WTC11 (cell line): ENCODE measurements at regions of chr9 and their contacts with region 1.

Region 1: GRCh38 chr9:137423004-137423874 is at the starts of genes EXD3 and NOXA1:
- DNase-seq: peak; percentile 95
- ATAC-seq: peak; percentile 91
- H3K4me3 Mint-ChIP-seq: peak within 1 kb of the TSS; percentile 88
- H3K27ac Mint-ChIP-seq: 0 out of 2 replicates have a peak within 1 kb of the TSS, but pooled peaks have one; percentile 78
- H3K4me1 Mint-ChIP-seq: peaks cover 7% of the 10 kb centered on the region
- H3K27me3 Mint-ChIP-seq: no peaks in the 10 kb centered on the region; the same call in 1 of the 2 replicates
- CTCF ChIP-seq: peak; percentile 66; the same call in 1 of the 2 replicates
- total RNA-seq, gene EXD3: 20.4 to 23.1 TPM (median 21.2 TPM) in 3 replicates
- total RNA-seq, gene NOXA1: 2.9 to 5.9 TPM (median 4.8 TPM) in 3 replicates

Region 2: GRCh38 chr9:137286975-137287383 is 136.3 kb before region 1 on chr9:
- CTCF ChIA-PET with region 1: interaction called, 17 read pairs
- POLR2A ChIA-PET with region 1: no interaction called
- DNase-seq: peak; percentile 75
- ATAC-seq: peak; percentile 99
- H3K4me3 Mint-ChIP-seq: no peak overlapping the region
- H3K27ac Mint-ChIP-seq: no peak overlapping the region
- H3K4me1 Mint-ChIP-seq: no peaks in the 10 kb centered on the region
- H3K27me3 Mint-ChIP-seq: peaks cover 26% of the 10 kb centered on the region
- CTCF ChIP-seq: no peak

Region 3: DNA sequence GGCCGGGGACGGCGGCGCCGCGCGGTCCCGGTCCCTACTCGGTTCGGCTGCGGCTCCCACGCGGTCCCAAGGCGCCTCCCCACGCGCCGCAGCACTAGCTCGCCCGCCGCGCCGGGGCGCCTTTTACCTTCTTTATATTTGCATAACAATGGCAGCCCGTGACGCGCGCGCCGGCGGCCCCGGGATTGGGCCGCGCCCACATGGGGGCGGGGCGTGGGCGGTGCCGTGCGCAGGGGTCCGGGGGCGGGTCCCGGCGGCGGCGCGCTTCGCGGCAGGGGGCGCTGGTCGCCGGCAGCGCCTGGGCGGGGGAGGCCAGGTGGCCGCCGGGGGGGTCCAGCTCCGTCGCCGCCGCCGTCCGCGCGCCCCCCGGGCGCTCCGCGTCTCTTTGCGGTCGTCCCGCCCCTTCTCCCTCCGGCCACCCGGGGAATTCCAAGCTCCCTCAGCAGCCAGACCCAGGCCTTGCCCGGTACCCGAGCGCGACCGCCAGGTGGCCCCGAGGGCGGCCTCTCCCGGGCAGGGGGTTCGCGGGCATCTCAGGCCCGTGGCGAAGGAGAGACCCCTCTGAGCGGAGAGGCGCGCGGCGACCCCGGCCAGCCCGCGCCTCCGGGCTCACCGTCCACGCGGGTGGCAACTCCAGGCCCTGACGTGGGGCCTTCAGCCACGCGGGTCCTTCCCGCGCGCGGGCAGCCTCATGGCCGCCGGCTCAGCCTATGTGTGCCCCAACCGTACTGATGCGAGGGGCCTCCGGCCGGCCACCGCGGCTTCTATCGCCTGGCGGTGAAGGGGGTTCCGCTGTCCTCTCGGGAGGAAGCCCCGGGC is 120.9 kb before region 1 on chr9 and contains the start of gene NRARP:
- CTCF ChIA-PET with region 1: interaction called, 26 read pairs
- POLR2A ChIA-PET with region 1: no interaction called
- DNase-seq: peak; percentile 84
- ATAC-seq: peak; percentile 31
- H3K4me3 Mint-ChIP-seq: peak within 1 kb of the TSS; percentile 94
- H3K27ac Mint-ChIP-seq: peak within 1 kb of the TSS; percentile 84
- H3K4me1 Mint-ChIP-seq: peaks cover 45% of the 10 kb centered on the region
- H3K27me3 Mint-ChIP-seq: peaks cover 20% of the 10 kb centered on the region
- CTCF ChIP-seq: peak; percentile 42; the same call in 1 of the 2 replicates
- total RNA-seq, gene NRARP: 46.7 to 52.4 TPM (median 51.5 TPM) in 3 replicates

Region 4: DNA sequence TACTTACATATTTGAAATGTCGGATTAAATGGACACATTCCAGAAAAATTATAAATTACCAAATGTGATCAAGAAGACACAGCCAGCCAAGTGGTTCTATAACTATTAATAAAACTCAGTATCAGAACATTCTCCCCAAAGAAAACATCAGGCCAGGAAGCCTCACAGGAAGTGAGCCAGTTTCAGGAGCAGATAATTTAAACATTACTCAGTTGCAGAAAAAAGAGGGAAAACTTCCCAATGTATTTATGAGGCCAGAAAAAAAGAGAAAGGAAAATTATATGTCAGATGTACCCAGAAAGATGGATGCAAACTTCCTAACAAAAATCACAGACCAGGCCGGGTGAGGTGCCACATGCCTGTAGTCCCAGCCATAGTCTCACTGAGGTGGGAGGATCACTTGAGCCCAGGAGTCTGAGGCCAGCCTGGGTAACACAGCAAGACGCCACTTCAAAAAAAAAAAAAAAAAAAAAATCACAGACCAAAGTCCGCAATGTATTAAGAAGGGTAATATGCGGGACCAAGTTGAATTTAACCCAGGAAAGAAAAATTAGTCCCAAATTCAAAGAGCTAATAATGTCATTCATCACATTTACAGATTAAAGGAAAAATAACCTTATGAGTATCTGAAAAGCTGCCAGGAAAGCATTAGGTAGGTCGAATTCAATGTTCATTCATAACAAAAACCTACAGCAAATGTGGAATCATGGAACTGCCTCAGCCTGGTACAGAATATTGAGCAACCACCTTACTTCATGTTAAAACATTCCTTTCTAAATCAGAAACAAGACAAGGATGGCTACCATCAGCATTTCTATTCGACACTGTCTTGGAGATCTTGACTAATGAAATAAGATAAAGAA is 84.0 kb before region 1 on chr9:
- CTCF ChIA-PET with region 1: no interaction called
- POLR2A ChIA-PET with region 1: no interaction called
- DNase-seq: no peak
- ATAC-seq: no peak
- H3K4me3 Mint-ChIP-seq: no peak overlapping the region
- H3K27ac Mint-ChIP-seq: no peak overlapping the region
- H3K4me1 Mint-ChIP-seq: no peaks in the 10 kb centered on the region
- H3K27me3 Mint-ChIP-seq: peaks cover 30% of the 10 kb centered on the region
- CTCF ChIP-seq: no peak

Region 5: DNA sequence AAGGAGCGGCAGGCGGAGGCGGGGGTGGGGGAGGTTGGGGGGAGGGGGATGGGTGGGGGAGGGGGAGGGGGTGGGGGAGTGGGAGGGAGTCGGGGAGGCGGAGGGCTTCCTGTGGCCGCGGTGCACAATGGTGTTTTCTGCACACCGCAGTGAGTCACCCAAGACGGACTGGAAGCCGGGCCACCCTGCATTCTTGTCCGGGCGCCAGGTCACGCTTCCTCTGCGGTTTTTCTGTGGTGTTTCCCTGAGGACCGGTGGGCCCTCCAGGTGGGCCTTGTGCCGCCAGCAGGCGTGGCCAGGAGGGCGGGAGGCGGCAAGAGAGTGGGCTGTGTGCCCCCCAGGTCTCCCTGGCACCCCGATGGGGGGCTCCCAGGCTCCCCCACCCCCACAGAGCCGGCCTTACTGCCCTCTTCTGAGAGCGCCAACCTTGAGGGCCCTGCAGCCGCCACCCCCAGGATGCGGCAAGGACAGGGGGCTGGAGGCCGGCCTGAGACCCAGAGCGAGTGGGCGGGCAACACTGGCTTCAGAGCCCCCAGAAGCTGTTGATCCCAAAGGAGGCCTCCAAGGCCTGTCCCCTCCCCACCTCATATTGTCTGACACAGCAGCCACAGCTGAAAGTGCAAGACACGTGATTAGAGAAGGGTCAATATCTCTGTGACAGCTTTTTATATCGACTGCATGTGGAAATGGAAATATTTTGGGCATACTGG is 11.4 kb before region 1 on chr9:
- CTCF ChIA-PET with region 1: interaction called, 24 read pairs
- POLR2A ChIA-PET with region 1: no interaction called
- DNase-seq: no peak
- ATAC-seq: no peak
- H3K4me3 Mint-ChIP-seq: no peak overlapping the region
- H3K27ac Mint-ChIP-seq: no peak overlapping the region
- H3K4me1 Mint-ChIP-seq: no peaks in the 10 kb centered on the region
- H3K27me3 Mint-ChIP-seq: no peaks in the 10 kb centered on the region
- CTCF ChIP-seq: no peak

Region 6: DNA sequence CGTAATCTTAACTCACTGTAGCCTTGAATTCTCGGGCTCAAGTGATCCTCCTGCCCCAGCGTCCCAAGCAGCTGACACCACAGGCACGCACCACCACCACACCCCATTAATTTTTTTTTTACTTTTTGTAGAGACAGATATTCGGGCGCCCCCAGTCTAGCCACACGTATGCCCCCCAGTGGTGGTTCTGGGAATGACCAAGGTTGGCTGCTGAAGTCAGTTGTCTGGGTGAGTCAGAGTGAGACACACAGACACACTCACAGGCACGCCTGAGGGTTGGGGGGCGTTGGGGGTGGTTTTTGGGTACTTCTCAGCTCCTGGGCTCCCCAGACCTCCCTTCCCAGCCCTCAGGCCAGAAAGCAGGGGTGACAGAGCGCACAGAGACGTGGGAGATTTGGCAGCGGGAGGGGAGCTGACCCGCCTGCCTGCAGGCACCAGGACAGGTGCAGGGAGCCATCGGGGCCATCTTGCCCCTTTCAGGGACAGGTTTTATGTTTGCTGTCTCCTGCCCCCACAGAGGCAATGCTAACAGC is 22.1 kb after region 1 on chr9:
- CTCF ChIA-PET with region 1: interaction called, 38 read pairs
- POLR2A ChIA-PET with region 1: interaction called, 5 read pairs
- DNase-seq: peak; percentile 90
- ATAC-seq: peak; percentile 39
- H3K4me3 Mint-ChIP-seq: no peak overlapping the region
- H3K27ac Mint-ChIP-seq: no peak overlapping the region
- H3K4me1 Mint-ChIP-seq: peaks cover 5% of the 10 kb centered on the region
- H3K27me3 Mint-ChIP-seq: no peaks in the 10 kb centered on the region; the same call in 1 of the 2 replicates
- CTCF ChIP-seq: peak; percentile 71

Region 7: DNA sequence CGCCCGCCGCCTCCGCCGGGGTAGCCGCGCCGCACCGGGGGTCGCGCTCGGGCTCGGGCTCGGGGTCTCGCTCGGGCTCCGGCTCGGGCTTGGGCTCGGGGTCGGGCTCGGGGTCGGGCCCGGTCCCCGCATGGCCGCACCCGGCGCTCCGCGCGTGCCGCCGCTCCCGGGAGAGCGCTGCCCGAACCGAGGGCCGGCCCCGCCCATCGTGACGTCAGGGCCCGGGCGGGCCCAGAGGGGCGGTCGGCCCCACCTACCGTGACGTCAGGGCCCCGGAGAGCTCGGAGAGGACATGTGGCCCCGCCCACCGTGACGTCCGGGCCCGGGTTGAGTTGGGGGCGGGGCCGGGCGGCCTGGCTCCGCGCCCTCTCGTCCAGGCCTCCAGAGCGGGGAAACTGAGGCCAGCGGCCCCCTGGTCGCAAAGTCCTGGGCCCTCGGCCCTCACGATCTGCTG is 35.9 kb after region 1 on chr9 and contains the start of gene NSMF:
- CTCF ChIA-PET with region 1: interaction called, 18 read pairs
- POLR2A ChIA-PET with region 1: interaction called, 11 read pairs
- DNase-seq: peak; percentile 90
- ATAC-seq: peak; percentile 51
- H3K4me3 Mint-ChIP-seq: peak within 1 kb of the TSS; percentile 30
- H3K27ac Mint-ChIP-seq: no peak within 1 kb of the TSS
- H3K4me1 Mint-ChIP-seq: peaks cover 6% of the 10 kb centered on the region
- H3K27me3 Mint-ChIP-seq: no peaks in the 10 kb centered on the region
- CTCF ChIP-seq: no peak
- total RNA-seq, gene NSMF: 61.6 to 63.7 TPM (median 61.9 TPM) in 3 replicates